GM12878 (cell line): ENCODE measurements at regions of chr14 and their contacts with region 1.

Region 1: DNA sequence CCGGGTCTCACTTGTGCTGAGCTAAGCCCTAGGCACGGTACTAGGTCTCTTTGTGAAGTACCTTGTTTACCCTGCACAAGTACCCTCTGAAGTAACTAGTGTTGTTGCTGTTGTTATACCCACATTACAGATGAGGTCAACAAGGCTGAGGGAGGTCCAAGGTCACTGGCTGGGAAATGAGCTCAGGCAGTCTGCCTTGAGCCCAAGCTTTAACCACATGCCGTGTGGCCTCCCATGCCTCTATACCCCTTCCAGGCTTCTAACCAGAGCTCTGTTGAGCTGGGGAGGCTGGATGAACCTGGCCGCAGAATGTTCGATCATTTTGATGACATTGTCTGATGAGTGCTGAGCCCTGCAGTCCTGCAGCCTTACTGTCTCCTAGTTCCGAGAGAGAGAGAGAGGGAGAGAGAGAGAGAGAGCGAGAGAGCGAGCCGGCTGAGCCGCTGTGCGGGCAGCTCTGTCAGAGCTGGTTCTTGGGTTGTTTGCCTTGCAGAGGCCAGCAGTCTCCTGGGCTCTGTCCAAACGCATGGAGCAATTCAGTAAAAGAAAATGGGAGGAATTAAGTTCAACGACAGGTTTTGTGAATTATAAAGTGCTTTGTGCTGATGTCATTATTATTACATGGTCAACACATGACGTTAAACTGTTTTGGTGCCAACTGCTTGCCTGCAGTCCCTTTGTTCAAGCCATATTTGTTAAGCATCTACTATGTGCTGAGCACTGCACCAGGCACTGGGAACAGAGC is 13.1 kb downstream of the JDP2 start:
- DNase-seq: no peak
- ATAC-seq: no peak; the same call in 2 of the 3 replicates
- H3K4me3 ChIP-seq: no peak overlapping the region
- H3K27ac ChIP-seq: peak overlapping the region; percentile 24; the same call in 1 of the 2 replicates
- H3K4me1 ChIP-seq: peaks cover 39% of the 10 kb centered on the region
- H3K27me3 ChIP-seq: no peaks in the 10 kb centered on the region
- CTCF ChIP-seq: no peak
- EP300 ChIP-seq: no peak
- POLR2A ChIP-seq: no peak
- RAD21 ChIP-seq: no peak

Region 2: DNA sequence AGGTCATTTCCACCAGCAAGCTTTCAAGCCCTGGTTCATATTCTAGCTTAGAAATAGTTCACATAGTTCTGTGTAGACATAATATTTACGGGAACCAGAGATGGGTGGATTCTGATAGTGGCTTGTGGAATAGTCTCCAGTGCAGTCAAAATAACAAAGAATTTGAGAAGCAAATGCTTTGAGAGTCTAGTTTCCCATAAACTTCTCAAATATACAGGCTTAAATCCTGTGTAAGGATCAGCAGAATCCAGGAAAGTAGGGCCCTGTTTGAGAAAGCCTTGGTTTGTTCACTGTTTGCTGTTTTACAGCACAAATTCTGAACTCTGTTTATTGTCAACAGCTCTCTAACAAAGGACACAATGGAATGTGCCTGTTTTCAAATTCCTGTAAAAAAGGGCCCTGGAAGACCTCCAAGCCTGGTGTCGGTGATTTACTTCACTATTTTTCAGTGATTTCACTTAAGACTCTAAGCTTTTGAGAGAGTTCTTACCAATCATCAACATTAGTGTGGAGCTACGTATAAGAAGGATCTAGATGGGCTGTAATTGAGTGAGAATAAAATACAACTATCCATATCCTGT is 173.7 kb before region 1 on chr14:
- CTCF ChIA-PET with region 1: no interaction called
- POLR2A ChIA-PET with region 1: no interaction called
- RAD21 ChIA-PET with region 1: no interaction called
- SMC1A ChIA-PET with region 1: no interaction called
- in situ Hi-C with region 1: no loop called
- intact Hi-C with region 1: no loop called
- DNase-seq: no peak
- ATAC-seq: no peak
- H3K4me3 ChIP-seq: no peak overlapping the region
- H3K27ac ChIP-seq: no peak overlapping the region
- H3K4me1 ChIP-seq: no peaks in the 10 kb centered on the region
- H3K27me3 ChIP-seq: peaks cover 4% of the 10 kb centered on the region in 2 experiments; a peak in 2 of 4 replicates
- CTCF ChIP-seq: no peak
- EP300 ChIP-seq: no peak
- POLR2A ChIP-seq: no peak
- RAD21 ChIP-seq: no peak

Region 3: GRCh38 chr14:75427482-75428229 is 13.2 kb before region 1 on chr14 and contains the start of gene JDP2:
- CTCF ChIA-PET with region 1: interaction called, 5 read pairs
- POLR2A ChIA-PET with region 1: interaction called, 10 read pairs
- RAD21 ChIA-PET with region 1: interaction called, 4 read pairs
- SMC1A ChIA-PET with region 1: interaction called, 22 read pairs
- in situ Hi-C with region 1: no loop called
- intact Hi-C with region 1: no loop called
- DNase-seq: no peak
- ATAC-seq: peak; percentile 69
- H3K4me3 ChIP-seq: peak within 1 kb of the TSS; percentile 86
- H3K27ac ChIP-seq: peak within 1 kb of the TSS; percentile 91
- H3K4me1 ChIP-seq: peaks cover 27% of the 10 kb centered on the region
- H3K27me3 ChIP-seq: no peaks in the 10 kb centered on the region
- CTCF ChIP-seq: 0 out of 6 replicates have a peak, but pooled peaks of 1 of the 3 experiments have one; percentile 3
- EP300 ChIP-seq: no peak
- POLR2A ChIP-seq: peak; percentile 66; the same call in 1 of the 2 replicates
- RAD21 ChIP-seq: no peak
- polyA plus RNA-seq, gene JDP2: 0.71 to 1.2 TPM

Region 4: DNA sequence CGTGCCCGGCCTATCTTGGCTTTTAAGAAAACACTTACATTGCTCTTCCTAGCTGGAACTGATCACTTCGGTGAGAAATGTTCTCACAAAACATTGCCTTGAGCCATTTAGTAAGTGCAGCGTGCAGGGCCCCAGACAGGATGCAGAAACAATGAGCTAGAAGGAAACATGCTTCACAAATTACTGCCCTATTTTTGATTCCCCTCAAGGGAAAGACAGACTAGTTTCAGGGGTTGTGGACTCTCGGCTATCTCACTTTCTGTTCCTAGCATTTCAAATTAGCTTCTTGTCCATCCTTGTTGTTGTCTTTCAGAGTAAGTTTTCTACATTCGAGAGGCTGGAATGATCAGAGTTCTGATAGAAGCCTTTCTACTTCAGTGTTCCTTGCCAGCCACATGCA is 519.3 kb after region 1 on chr14:
- CTCF ChIA-PET with region 1: no interaction called
- POLR2A ChIA-PET with region 1: interaction called, 11 read pairs
- RAD21 ChIA-PET with region 1: no interaction called
- SMC1A ChIA-PET with region 1: no interaction called
- in situ Hi-C with region 1: no loop called
- intact Hi-C with region 1: no loop called
- DNase-seq: peak; percentile 78
- ATAC-seq: peak; percentile 97
- H3K4me3 ChIP-seq: no peak overlapping the region
- H3K27ac ChIP-seq: peak overlapping the region; percentile 38
- H3K4me1 ChIP-seq: peaks cover 19% of the 10 kb centered on the region
- H3K27me3 ChIP-seq: no peaks in the 10 kb centered on the region
- CTCF ChIP-seq: no peak
- EP300 ChIP-seq: 0 out of 4 replicates have a peak, but pooled peaks of 1 of the 2 experiments have one; percentile 18
- POLR2A ChIP-seq: no peak
- RAD21 ChIP-seq: no peak